AG04450 (cell line): ENCODE measurements at regions of chr2 and their contacts with region 1.

Region 1: GRCh38 chr2:234135720-234136221 is 85.3 kb downstream of the SPP2 start:
- DNase-seq: peak; percentile 39
- H3K4me3 ChIP-seq: no peak overlapping the region
- H3K27ac ChIP-seq: no peak overlapping the region
- H3K27me3 ChIP-seq: peaks cover under 1% of the 10 kb centered on the region
- CTCF ChIP-seq: peak; percentile 91

Region 2: DNA sequence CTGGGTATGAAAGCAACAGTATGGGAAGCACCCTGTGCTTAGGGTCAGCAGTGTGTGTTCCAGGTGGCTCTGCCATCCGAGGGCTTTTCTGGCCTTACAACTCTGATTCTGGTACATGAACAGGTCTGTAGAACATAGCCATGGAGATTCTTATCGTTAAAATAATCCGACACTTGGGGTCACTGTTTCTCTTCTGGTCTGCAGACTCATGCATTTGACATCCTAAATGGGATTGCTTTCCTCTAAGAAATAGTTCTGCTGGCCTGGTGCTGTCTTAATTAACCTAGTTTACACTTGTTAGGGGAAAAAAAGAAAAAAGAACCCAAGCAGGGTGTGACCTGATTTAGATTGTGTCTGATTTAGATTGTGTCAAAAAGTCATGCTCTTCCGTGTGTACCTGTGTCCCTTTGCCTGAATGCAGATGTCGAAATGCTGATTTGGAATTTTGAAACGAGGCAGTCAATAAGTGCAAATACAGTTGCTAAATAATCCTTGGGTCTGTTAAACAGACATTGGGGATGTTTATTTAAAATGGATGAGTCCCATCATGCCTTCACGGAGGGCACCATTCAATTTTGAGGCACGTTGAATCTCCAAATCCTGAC is 159.0 kb before region 1 on chr2:
- CTCF ChIA-PET with region 1: interaction called, 13 read pairs
- POLR2A ChIA-PET with region 1: no interaction called
- DNase-seq: peak; percentile 45
- H3K4me3 ChIP-seq: no peak overlapping the region
- H3K27ac ChIP-seq: no peak overlapping the region
- H3K27me3 ChIP-seq: no peaks in the 10 kb centered on the region
- CTCF ChIP-seq: peak; percentile 56

Region 3: GRCh38 chr2:234500394-234501006 is 364.7 kb after region 1 on chr2:
- CTCF ChIA-PET with region 1: interaction called, 50 read pairs
- POLR2A ChIA-PET with region 1: interaction called, 5 read pairs
- DNase-seq: no peak
- H3K4me3 ChIP-seq: no peak overlapping the region
- H3K27ac ChIP-seq: no peak overlapping the region
- H3K27me3 ChIP-seq: no peaks in the 10 kb centered on the region
- CTCF ChIP-seq: peak; percentile 64

Region 4: DNA sequence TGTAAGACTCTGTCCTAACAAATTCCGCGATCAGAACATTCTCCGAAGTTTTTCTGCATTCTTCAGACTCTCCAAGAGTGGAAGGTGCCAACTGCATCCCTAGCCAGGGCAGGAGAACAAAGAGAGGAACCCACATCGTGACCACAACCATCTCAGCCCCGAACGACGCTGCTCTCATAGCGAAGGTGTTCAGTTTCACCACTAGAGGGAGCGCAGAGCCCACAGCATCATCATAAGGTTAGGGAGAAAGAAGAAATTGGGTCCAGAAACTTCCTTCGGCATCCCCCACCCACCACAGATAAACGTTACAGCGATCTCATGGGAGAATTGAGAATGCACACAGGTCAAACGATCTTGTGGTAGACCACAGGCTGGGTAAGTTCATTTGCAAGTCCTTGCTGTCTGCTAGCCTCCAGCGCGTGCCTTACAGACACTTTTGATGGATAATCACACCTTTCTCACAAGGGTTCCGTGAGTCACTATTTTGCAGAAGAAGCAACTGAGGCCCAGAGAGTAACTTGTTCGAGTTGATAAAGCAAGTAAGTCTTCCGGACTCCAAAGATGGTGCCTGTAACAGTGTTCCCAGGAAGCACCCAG is 414.8 kb after region 1 on chr2:
- CTCF ChIA-PET with region 1: interaction called, 53 read pairs
- POLR2A ChIA-PET with region 1: no interaction called
- DNase-seq: peak; percentile 78
- H3K4me3 ChIP-seq: no peak overlapping the region
- H3K27ac ChIP-seq: no peak overlapping the region
- H3K27me3 ChIP-seq: no peaks in the 10 kb centered on the region
- CTCF ChIP-seq: peak; percentile 97